ENCODE measurements at regions of chr13 and their contacts with region 1.

Region 1: DNA sequence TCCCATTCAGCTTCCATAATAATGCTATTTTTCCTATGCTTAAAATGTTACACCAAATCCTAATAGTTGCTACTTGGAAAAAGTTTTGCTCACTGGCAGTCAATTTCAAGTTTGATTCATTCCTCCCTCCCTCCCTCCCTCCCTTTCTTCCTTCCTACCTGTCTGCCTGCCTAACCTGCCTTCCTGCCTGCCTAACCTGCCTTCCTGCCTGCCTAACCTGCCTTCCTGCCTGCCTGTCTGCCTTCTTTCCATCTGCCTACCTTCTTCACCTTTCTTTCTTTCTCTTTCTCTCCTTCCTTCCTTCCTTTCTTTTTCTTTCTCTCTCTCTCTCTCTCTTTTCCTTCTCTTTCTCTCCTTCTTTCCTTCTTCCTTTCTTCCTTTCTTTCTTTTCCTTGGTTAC is 418.7 kb downstream of the PCDH9 start:
- DNase-seq: no peak
- ATAC-seq: no peak
- H3K4me3 ChIP-seq: no peak overlapping the region
- H3K27ac ChIP-seq: no peak overlapping the region
- H3K4me1 ChIP-seq: peaks cover 0 to under 1% (median 0%) of the 10 kb centered on the region in 9 donors
- H3K27me3 ChIP-seq: no peaks in the 10 kb centered on the region
- CTCF ChIP-seq: no peak

Region 2: GRCh38 chr13:66402071-66402470 is 409.4 kb before region 1 on chr13:
- intact Hi-C with region 1: loop called in 1 of 10 experiments (anchors 5 kb)
- DNase-seq: no peak
- ATAC-seq: no peak
- H3K4me3 ChIP-seq: no peak overlapping the region
- H3K27ac ChIP-seq: no peak overlapping the region
- H3K4me1 ChIP-seq: peaks cover 0 to 9% (median 0%) of the 10 kb centered on the region in 9 donors
- H3K27me3 ChIP-seq: no peaks in the 10 kb centered on the region
- CTCF ChIP-seq: no peak

Measured in heart right ventricle (tissue), 16 donors.